ENCODE measurements at regions of chr12 and their contacts with region 1.

Region 1: DNA sequence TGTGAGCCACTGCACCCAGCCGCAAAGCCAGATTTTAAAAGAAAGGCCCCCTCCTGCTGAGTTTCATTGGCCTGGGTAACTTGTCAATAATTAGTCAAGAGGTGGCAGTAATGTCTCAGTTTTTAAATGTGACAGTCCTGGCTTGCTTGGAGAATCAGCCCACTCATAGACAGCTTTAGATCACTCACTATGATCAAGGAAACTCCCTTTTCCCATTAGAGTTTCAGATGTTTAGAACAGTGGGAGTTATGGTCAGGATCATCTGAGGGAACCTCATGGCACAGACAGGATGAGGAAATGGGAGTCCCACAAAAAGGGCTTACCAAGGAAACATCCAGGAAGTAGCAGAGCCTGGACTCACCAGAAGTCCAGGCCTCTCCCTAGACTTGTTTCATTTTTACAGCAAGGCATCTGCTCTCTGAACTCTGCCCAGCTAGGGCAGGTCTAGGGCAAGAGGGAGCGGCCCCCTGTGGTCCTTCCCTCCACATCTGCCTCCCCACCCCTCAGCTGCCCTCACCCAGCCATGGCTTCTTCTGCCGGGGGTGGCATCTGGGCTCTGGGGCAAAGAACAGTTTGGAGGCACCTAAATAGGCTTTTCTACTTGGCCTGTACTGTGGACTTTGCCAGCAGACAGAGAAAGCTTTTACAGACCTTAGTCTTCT is 11.2 kb downstream of the BCL2L14 start:
- DNase-seq: peak; percentile 48
- H3K4me3 ChIP-seq: no peak overlapping the region
- H3K27ac ChIP-seq: no peak overlapping the region
- H3K4me1 ChIP-seq: no peaks in the 10 kb centered on the region
- H3K27me3 ChIP-seq: no peaks in the 10 kb centered on the region
- CTCF ChIP-seq: peak; percentile 28 to 39

Region 2: GRCh38 chr12:12266873-12267741 is 185.1 kb after region 1 on chr12 and contains the start of gene LRP6:
- CTCF ChIA-PET with region 1: no interaction called
- dilution Hi-C with region 1: no loop called
- in situ Hi-C with region 1: no loop called
- intact Hi-C with region 1: loop called (anchors 2 kb)
- DNase-seq: peak; percentile 94
- H3K4me3 ChIP-seq: peak within 1 kb of the TSS; percentile 89 to 98 (median 95)
- H3K27ac ChIP-seq: peak within 1 kb of the TSS; percentile 99
- H3K4me1 ChIP-seq: peaks cover 18% of the 10 kb centered on the region
- H3K27me3 ChIP-seq: no peaks in the 10 kb centered on the region
- CTCF ChIP-seq: no peak
- total RNA-seq, gene LRP6: 19.2 to 27.7 TPM

Region 3: GRCh38 chr12:12327802-12328201 is 245.8 kb after region 1 on chr12:
- CTCF ChIA-PET with region 1: interaction called, 3 read pairs
- dilution Hi-C with region 1: loop called (anchors 25 kb)
- in situ Hi-C with region 1: loop called (anchors 10 kb)
- intact Hi-C with region 1: loop called (anchors 1 kb)
- DNase-seq: peak; percentile 29
- H3K4me3 ChIP-seq: no peak overlapping the region
- H3K27ac ChIP-seq: no peak overlapping the region
- H3K4me1 ChIP-seq: no peaks in the 10 kb centered on the region
- H3K27me3 ChIP-seq: no peaks in the 10 kb centered on the region
- CTCF ChIP-seq: peak; percentile 70 to 73

Region 4: GRCh38 chr12:12334367-12335040 is 252.5 kb after region 1 on chr12:
- CTCF ChIA-PET with region 1: interaction called, 3 read pairs
- dilution Hi-C with region 1: loop called (anchors 25 kb)
- in situ Hi-C with region 1: loop called (anchors 10 kb)
- intact Hi-C with region 1: loop called (anchors 1 kb)
- DNase-seq: peak; percentile 25
- H3K4me3 ChIP-seq: no peak overlapping the region
- H3K27ac ChIP-seq: no peak overlapping the region
- H3K4me1 ChIP-seq: peaks cover 26% of the 10 kb centered on the region
- H3K27me3 ChIP-seq: no peaks in the 10 kb centered on the region
- CTCF ChIP-seq: peak; percentile 80 to 81

Region 5: DNA sequence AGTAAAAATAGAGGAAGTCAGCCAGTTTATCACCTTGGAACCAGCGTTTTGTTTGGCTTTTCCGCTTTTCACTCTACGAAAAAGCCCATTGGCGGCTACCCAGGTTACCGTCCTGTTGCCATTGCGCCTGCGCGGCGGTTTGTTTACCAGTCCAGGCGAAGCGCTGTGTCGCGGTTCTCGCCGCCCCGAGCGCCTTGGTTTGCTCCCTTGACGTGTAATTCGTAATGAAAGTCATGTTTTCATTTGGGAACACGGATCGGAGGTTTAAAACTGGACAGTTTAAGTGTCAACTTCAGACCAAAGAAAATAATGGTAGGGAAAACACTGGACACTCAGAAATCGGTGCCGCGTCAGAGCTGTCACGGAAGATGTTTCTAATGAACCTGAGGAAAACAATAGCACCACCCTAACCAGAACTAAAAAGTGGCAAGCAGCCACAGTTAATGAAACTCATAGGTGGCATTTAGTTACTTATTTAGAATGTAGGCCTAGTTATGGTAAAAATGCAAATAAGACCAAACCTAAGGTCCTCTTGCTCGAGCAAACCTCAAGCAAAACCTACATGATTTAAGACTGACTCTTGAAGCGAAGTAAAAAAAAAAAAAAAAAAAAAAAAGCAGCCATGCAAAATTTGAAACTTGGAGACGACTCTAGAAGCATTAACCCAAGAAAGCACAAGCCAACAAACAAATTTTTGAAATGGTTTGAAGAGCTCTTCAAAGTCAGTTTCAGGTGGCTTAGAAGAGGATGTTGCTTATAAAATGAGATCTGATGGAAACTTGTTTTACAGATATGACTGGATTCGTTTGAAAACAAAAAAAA is 614.8 kb after region 1 on chr12:
- CTCF ChIA-PET with region 1: no interaction called
- dilution Hi-C with region 1: no loop called
- in situ Hi-C with region 1: loop called in 1 of 2 experiments (anchors 25 kb)
- intact Hi-C with region 1: no loop called
- DNase-seq: peak; percentile 78
- H3K4me3 ChIP-seq: peak overlapping the region; percentile 55 to 90 (median 59)
- H3K27ac ChIP-seq: peak overlapping the region; percentile 96
- H3K4me1 ChIP-seq: peaks cover 8% of the 10 kb centered on the region
- H3K27me3 ChIP-seq: no peaks in the 10 kb centered on the region
- CTCF ChIP-seq: no peak